T-cell (primary cell): ENCODE measurements at regions of chr5 and their contacts with region 1.

Region 1: DNA sequence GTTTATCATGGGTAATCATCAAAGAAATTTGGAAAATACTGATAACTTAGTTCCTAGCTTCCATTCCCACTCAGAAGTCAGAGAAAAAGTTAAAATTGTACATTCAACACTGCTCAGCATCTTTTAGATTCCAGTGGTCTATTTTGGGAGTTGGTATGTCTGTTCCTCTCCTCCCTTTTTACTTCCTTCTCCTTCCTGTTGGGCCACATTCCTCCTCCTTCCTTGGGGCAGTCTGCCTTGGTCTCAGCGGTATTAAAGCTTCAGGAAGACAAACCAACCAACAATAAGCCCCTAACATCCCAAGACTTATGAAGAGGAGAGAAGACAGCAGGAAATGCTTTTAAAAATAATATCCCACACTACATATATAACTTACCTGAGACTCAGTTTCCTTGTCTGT is 49.9 kb upstream of the SSBP2 start:
- DNase-seq: no peak
- ATAC-seq: no peak
- H3K4me3 ChIP-seq: no peak overlapping the region
- H3K4me3 Mint-ChIP-seq: no peak overlapping the region
- H3K27ac ChIP-seq: no peak overlapping the region
- H3K27ac Mint-ChIP-seq: no peak overlapping the region
- H3K4me1 ChIP-seq: no peaks in the 10 kb centered on the region
- H3K4me1 Mint-ChIP-seq: peaks cover 8 to 10% (median 10%) of the 10 kb centered on the region in 3 donors
- H3K27me3 ChIP-seq: peaks cover 0 to 5% of the 10 kb centered on the region in 2 experiments
- H3K27me3 Mint-ChIP-seq: peaks cover 0 to 8% of the 10 kb centered on the region in 2 donors

Region 2: DNA sequence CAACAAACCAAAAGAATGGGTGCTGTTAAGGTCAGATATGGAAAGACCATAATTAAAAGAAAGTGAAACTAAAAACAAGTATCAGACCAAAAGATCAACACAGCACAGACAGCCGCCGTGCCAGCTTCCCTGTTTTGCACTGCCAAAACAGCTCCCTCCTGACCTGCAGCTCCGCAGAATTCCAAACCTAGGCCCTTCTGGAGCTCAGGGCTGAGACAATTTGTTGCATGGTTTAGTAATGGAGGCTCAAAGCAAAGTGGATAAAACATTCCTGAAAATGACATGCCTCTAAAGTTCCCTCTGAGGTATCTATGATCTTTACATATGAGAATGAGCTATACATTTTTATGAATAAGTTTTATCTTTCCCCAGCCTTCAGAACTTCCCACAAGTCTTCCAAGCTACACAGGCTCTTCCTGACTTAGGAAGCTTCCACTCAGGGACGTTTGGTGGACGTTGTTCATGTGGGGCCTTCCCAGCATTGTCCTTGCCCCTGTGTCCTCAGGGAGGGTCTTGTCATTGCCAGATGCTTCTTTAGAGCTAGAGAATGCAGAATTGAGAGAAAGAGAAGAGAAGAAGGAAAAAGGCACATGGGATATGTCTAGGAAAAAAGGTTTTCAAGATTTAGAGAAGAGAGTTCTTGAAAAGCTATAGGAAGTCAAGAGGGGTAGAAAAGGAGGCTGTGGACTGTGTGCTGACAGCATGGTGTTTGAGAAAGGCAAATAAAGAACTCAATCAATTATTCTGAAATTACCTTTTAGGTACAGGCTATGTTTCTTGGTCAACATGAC is 21.5 kb before region 1 on chr5:
- CTCF ChIA-PET with region 1: no interaction called
- POLR2A ChIA-PET with region 1: interaction called in 1 of 2 experiments, 12 read pairs
- DNase-seq: peak in 31 of 35 experiments; percentile 2 to 59 (median 23)
- ATAC-seq: peak; percentile 67 to 79 (median 74)
- H3K4me3 ChIP-seq: peak overlapping the region; percentile 37 to 60
- H3K4me3 Mint-ChIP-seq: peak overlapping the region; percentile 81 to 86 (median 83)
- H3K27ac ChIP-seq: peak overlapping the region; percentile 63
- H3K27ac Mint-ChIP-seq: peak overlapping the region; percentile 96 to 99
- H3K4me1 ChIP-seq: peaks cover 14 to 18% of the 10 kb centered on the region in 2 experiments
- H3K4me1 Mint-ChIP-seq: peaks cover 24 to 30% (median 26%) of the 10 kb centered on the region in 3 donors
- H3K27me3 ChIP-seq: no peaks in the 10 kb centered on the region
- H3K27me3 Mint-ChIP-seq: no peaks in the 10 kb centered on the region

Region 3: DNA sequence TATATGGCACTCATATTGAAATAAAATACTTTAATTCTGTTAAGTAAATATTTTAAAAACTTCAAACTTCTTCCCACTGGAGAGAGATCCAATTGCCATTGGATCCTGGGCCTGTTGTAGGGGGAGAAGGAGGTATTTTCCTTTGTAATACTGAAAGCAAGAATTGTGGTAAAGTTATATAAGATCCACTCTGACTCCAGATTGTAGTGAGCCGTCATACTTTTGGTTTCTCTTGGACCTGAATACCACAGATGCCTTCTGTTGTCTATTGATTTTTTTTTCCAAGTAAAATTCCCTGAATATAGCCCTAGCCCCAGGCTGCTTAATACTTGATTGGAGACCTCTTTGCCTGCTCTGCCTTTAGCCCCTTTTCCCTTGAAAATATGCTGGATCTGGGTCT is 257.9 kb after region 1 on chr5:
- CTCF ChIA-PET with region 1: no interaction called
- POLR2A ChIA-PET with region 1: no interaction called
- DNase-seq: no peak
- ATAC-seq: no peak
- H3K4me3 ChIP-seq: no peak overlapping the region
- H3K4me3 Mint-ChIP-seq: no peak overlapping the region
- H3K27ac ChIP-seq: no peak overlapping the region
- H3K27ac Mint-ChIP-seq: no peak overlapping the region
- H3K4me1 ChIP-seq: no peaks in the 10 kb centered on the region
- H3K4me1 Mint-ChIP-seq: peaks cover 0 to 14% (median 6%) of the 10 kb centered on the region in 3 donors
- H3K27me3 ChIP-seq: no peaks in the 10 kb centered on the region
- H3K27me3 Mint-ChIP-seq: no peaks in the 10 kb centered on the region